Activated naive CD4-positive, alpha-beta T cell treated with anti-CD3 and anti-CD28 coated beads for 36 hours (primary cell): ENCODE measurements at regions of chr10 and their contacts with region 1.

Region 1: DNA sequence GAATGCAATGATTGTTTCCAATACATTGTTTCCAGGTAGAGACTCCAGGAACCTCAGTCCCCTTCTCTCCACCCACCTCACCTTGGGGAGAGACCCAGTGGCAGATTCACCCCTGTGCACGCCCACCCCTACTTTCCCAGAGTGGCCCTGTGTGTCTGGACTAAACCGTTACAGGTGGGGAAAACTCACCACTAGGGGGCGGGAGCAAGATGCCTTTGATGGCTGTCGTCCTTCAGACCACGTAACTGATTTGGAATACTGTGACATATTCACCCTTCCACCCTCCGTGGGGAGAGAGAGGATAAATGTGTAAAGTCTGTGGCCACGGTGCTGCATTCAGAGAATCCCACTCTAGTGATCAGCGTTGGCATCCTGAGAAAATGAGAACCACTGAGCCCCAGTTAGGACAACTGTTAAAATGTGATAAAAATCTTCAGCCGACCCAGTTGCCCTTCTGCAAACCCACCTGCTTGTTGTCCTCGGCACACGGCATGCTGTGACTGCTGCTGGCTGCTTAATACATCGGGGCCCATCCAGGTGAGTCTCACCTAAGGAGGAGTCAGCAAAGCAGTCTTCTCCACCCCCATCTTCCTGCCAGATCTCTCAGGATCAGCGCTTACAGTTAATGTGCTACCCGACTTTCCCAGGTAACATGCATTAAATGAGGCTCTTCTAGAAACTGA is 41.5 kb upstream of the NMT2 start:
- DNase-seq: peak; percentile 92
- H3K4me3 Mint-ChIP-seq: no peak overlapping the region
- H3K27ac Mint-ChIP-seq: no peak overlapping the region
- H3K4me1 Mint-ChIP-seq: peaks cover 53% of the 10 kb centered on the region
- H3K27me3 Mint-ChIP-seq: no peaks in the 10 kb centered on the region

Region 2: GRCh38 chr10:14995964-14996565 is 213.9 kb before region 1 on chr10:
- CTCF ChIA-PET with region 1: no interaction called
- intact Hi-C with region 1: loop called (anchors 2 kb)
- DNase-seq: no peak
- H3K4me3 Mint-ChIP-seq: peak overlapping the region; percentile 13
- H3K27ac Mint-ChIP-seq: no peak overlapping the region
- H3K4me1 Mint-ChIP-seq: peaks cover 7% of the 10 kb centered on the region
- H3K27me3 Mint-ChIP-seq: peaks cover 3% of the 10 kb centered on the region

Region 3: GRCh38 chr10:15122477-15123030 is 87.4 kb before region 1 on chr10:
- CTCF ChIA-PET with region 1: interaction called, 3 read pairs
- intact Hi-C with region 1: loop called (anchors 1 kb)
- DNase-seq: peak; percentile 59
- H3K4me3 Mint-ChIP-seq: no peak overlapping the region
- H3K27ac Mint-ChIP-seq: peak overlapping the region; percentile 86
- H3K4me1 Mint-ChIP-seq: peaks cover 32% of the 10 kb centered on the region
- H3K27me3 Mint-ChIP-seq: no peaks in the 10 kb centered on the region

Region 4: DNA sequence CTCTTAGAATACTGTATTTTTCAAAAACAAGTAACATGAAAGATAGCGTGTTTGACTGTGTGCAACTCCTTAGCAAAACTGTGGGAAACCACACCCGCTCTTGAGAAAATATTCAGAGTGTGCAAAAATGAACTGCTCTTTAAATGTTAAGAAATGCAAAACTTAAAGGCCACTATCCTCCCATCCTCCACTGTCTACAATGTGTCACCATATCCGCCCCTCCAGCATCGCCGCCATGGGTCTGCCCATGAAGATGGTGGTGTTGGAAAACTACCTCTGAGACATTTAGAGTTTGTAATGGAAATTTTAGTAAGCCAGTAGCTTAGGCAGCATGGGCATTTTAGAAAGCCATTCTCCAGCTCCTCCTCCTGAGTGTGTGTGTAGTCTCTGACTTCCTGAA is 21.4 kb before region 1 on chr10:
- CTCF ChIA-PET with region 1: interaction called, 4 read pairs
- intact Hi-C with region 1: loop called (anchors 1 kb)
- DNase-seq: peak; percentile 75
- H3K4me3 Mint-ChIP-seq: no peak overlapping the region
- H3K27ac Mint-ChIP-seq: peak overlapping the region; percentile 74
- H3K4me1 Mint-ChIP-seq: peaks cover 43% of the 10 kb centered on the region
- H3K27me3 Mint-ChIP-seq: no peaks in the 10 kb centered on the region

Region 5: DNA sequence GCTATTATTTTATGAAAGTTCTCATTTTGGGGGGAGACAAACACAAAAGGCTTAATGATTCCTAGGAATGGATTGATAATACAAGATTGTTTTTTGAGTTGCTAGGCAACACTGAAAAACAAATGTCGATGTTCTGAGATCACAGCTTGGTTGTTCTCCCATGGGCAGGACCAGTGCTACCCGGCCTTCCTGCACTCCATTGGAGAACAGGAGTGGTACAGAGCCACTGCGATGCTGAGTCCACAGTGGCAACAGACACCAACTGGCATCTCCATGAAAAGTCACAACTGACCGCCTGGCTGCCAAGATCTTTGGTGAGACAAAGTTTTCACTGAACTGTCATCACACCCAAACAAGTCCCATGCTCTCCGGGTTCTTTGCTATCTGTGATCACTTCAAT is 27.4 kb after region 1 on chr10:
- CTCF ChIA-PET with region 1: no interaction called
- intact Hi-C with region 1: no loop called
- DNase-seq: no peak
- H3K4me3 Mint-ChIP-seq: no peak overlapping the region
- H3K27ac Mint-ChIP-seq: no peak overlapping the region
- H3K4me1 Mint-ChIP-seq: peaks cover 11% of the 10 kb centered on the region
- H3K27me3 Mint-ChIP-seq: no peaks in the 10 kb centered on the region

Region 6: GRCh38 chr10:15370856-15371701 is 161.1 kb after region 1 on chr10 and contains the start of gene FAM171A1:
- CTCF ChIA-PET with region 1: interaction called, 4 read pairs
- intact Hi-C with region 1: loop called (anchors 1 kb)
- DNase-seq: peak; percentile 76
- H3K4me3 Mint-ChIP-seq: peak within 1 kb of the TSS; percentile 70
- H3K27ac Mint-ChIP-seq: no peak within 1 kb of the TSS
- H3K4me1 Mint-ChIP-seq: peaks cover 8% of the 10 kb centered on the region
- H3K27me3 Mint-ChIP-seq: peaks cover 3% of the 10 kb centered on the region
- total RNA-seq, gene FAM171A1: 4.8 to 5.2 TPM